Adrenal gland (tissue), 19 donors: ENCODE measurements at regions of chr3 and their contacts with region 1.

Region 1: GRCh38 chr3:36957862-36958686 is 13.2 kb upstream of the TRANK1 start:
- DNase-seq: peak in 1 of 7 donors; percentile 27
- H3K4me3 ChIP-seq: no peak overlapping the region
- H3K27ac ChIP-seq: no peak overlapping the region
- H3K4me1 ChIP-seq: no peaks in the 10 kb centered on the region
- H3K27me3 ChIP-seq: no peaks in the 10 kb centered on the region
- CTCF ChIP-seq: no peak
- POLR2A ChIP-seq: no peak

Region 2: DNA sequence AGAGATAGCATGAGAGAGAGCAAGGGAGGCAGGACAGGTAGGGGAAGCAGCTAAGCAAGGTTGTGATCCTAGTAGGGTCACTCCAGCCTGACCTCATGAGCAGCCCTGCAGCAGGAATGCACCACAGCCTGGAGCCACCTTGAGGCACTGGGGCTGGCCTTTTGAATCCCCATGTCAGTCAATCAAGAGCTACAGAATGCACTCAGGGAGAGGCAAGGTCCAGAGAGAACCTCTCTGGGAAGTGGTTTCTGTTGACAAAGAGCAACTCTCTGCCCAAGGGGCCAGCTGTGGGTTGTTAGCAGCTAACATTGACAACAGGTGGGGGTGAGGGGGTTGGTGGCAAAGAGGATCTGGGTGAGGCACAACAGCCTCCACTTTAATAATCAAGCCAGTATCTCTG is 67.8 kb before region 1 on chr3:
- intact Hi-C with region 1: no loop called
- DNase-seq: no peak
- H3K4me3 ChIP-seq: no peak overlapping the region
- H3K27ac ChIP-seq: no peak overlapping the region
- H3K4me1 ChIP-seq: peaks cover 0 to 18% of the 10 kb centered on the region in 2 donors
- H3K27me3 ChIP-seq: no peaks in the 10 kb centered on the region
- CTCF ChIP-seq: no peak
- POLR2A ChIP-seq: no peak

Region 3: GRCh38 chr3:36907911-36908646 is 50.0 kb before region 1 on chr3:
- intact Hi-C with region 1: loop called (anchors 10 kb)
- DNase-seq: peak; percentile 42 to 78 (median 62)
- H3K4me3 ChIP-seq: peak overlapping the region in 3 of 4 donors; percentile 20 to 58 (median 36)
- H3K27ac ChIP-seq: peak overlapping the region; percentile 34 to 90 (median 60)
- H3K4me1 ChIP-seq: peaks cover 4 to 24% of the 10 kb centered on the region in 2 donors
- H3K27me3 ChIP-seq: no peaks in the 10 kb centered on the region
- CTCF ChIP-seq: no peak
- POLR2A ChIP-seq: no peak

Region 4: GRCh38 chr3:37097776-37098175 is 139.7 kb after region 1 on chr3:
- intact Hi-C with region 1: no loop called
- DNase-seq: no peak
- H3K4me3 ChIP-seq: no peak overlapping the region
- H3K27ac ChIP-seq: peak overlapping the region in 2 of 5 donors; percentile 38 to 42
- H3K4me1 ChIP-seq: peaks cover 14 to 25% of the 10 kb centered on the region in 2 donors
- H3K27me3 ChIP-seq: no peaks in the 10 kb centered on the region
- CTCF ChIP-seq: no peak
- POLR2A ChIP-seq: no peak